Dendritic cell treated with granulocyte-macrophage colony-stimulating factor and Interleukin-4, amounts not matched to agents 40 ng/mL and 50 ng/mL, for 4 days (primary cell): ENCODE measurements at regions of chr2 and their contacts with region 1.

Region 1: DNA sequence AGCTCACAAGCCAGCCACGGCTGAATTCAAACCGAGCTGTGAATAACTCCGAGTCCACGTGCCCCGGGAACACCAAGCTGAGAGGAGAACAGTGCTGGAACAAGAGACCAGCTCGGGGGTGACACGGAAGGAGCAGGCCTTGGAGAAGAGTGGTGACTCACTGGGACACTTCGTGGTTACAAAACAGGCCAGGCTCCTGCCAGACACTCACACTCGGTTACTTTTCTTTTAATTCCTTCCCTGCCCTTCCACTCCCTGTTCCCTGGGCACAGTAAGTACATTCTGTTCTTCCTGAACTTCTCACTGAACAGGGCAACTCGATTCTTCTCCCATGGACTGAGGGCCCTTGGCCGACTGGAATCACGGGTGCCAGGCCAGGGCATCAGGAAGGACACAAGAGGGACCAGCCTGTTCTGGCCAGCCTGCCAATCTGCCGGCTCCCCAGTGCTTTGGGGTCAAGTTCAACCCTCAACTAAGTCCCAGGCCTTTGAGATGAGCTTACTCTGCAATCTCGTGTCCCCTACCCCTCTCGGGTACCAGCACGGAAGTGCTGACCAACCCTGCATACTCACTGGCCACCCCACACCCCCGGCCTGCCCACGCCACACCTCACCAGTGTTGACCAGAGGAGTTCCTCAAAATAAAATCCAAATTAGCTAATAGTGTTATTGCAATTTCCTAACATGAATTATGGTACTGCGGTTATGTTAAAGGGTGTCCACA is 87.5 kb downstream of the TFCP2L1 start:
- H3K4me3 Mint-ChIP-seq: no peak overlapping the region
- H3K27ac Mint-ChIP-seq: peak overlapping the region; percentile 85
- H3K4me1 Mint-ChIP-seq: peaks cover 54% of the 10 kb centered on the region
- H3K27me3 Mint-ChIP-seq: peaks cover 12% of the 10 kb centered on the region

Region 2: DNA sequence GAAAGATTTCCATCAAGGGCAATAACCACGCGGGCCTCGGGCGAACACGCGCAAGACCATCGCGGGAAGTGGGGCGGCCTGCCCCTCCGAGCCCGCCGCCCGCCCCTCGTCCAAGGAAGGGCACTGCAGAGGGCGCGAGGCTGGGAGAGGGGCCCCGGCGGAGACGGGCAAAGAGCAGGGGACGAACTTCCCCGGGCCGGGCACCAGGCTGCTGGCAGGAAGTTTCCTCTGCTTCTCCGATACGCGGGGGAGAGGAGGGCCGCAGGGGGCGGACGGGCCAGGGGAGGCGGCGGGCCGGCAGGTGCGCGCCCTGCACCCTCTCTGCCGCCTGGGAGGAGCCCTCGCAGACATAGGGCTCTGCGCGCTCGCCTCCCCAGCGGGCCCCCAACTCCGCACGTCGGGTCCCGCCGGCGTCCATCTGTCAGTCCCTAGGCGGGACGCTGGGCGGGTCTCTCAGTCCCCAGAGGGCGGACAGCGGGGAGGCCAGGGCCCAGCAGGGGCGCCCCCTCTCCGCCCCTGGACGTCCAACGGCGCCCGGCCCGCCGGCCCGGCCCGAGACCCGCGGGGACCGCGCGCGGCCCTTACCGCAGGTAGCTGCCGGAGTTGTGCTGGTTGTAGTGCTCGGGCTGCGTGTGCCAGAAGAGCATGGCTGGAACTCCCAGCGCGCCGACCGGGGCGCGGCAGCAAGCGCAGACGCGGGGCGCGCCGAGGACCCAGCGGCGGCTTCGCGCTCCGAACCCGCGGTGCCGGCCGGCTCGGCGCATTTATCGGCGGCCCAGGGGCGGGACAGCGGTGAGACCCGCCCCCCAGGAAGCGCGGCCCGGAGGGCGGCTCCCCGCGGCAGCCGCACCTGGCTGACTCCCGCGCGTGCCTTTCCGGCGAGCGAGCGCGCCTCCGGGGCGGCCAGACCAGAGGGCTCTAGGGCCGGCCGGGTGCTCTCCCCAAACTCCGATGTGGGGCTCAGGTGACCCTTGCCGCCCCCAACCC is 87.2 kb after region 1 on chr2 and contains the start of gene TFCP2L1:
- intact Hi-C with region 1: loop called (anchors 10 kb)
- H3K4me3 Mint-ChIP-seq: peak within 1 kb of the TSS; percentile 63
- H3K27ac Mint-ChIP-seq: peak within 1 kb of the TSS; percentile 28
- H3K4me1 Mint-ChIP-seq: peaks cover 76% of the 10 kb centered on the region
- H3K27me3 Mint-ChIP-seq: peaks cover 50% of the 10 kb centered on the region

Region 3: DNA sequence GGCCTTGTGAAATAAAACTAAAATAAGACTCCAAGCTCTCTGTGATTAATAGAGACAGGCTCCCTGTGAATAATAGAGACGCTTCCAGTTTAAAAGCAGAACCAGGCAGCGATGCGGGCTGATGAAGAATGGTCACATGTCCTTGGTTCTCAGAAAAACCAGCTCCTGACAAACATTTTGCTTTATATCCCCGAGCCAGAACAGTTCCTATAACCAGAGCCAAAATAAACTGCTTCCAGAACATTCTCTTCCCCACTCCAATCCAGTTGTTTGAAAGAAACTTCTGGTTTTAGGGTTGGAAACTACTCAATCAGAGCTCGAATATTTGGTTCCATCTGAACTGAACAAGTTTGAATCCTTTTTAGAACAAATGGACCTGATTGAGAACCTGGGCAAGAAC is 771.6 kb after region 1 on chr2:
- intact Hi-C with region 1: no loop called
- H3K4me3 Mint-ChIP-seq: peak overlapping the region; percentile 13
- H3K27ac Mint-ChIP-seq: peak overlapping the region; percentile 68
- H3K4me1 Mint-ChIP-seq: peaks cover 25% of the 10 kb centered on the region
- H3K27me3 Mint-ChIP-seq: peaks cover 4% of the 10 kb centered on the region